Left colon (tissue), 2 donors: ENCODE measurements at regions of chr6 and their contacts with region 1.

Region 1: GRCh38 chr6:64012351-64013001 is 376.9 kb downstream of the PHF3 start:
- DNase-seq: peak in 1 of 2 donors; percentile 15
- ATAC-seq: peak; percentile 99

Region 2: DNA sequence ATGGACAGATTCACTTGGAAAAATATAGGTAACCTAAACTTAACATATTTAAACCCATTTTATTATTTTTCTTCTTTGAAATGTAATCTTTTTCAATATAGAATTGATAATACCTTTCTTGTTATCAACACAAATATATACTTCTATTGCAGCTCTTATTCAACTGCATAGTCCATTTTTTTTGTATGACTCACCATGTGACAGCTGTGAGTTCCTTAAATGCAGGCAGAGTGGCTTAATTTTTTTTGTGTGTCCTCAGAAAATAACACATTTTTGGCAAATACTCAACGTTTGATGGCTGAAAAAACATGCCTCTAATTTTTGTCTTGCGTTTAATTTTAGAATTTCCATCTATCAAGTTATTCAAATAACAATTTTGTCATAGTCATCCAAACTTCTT is 77.9 kb after region 1 on chr6:
- intact Hi-C with region 1: no loop called
- DNase-seq: no peak
- ATAC-seq: no peak

Region 3: DNA sequence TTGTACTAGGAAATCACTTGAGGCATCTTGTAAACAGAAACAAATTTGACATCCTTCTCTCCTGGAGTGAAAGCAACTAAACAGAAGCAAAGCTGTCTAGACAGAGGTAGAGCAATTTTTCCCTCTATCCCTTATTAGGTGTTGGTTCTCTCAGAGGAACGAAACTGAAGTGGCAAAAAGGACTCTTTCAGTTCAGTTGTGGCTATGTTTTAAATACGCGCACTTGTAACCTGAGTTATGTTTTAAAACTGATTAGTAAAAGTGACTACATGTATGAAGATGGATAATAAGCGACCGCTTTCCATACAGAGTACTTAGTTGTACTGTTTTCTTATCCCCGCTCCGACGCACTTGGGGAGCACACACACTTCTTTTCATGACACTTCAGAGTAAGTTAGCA is 174.1 kb after region 1 on chr6:
- intact Hi-C with region 1: no loop called
- DNase-seq: no peak
- ATAC-seq: no peak

Region 4: GRCh38 chr6:64325093-64325492 is 312.6 kb after region 1 on chr6:
- intact Hi-C with region 1: loop called in 1 of 2 experiments (anchors 10 kb)
- DNase-seq: no peak
- ATAC-seq: no peak